ENCODE measurements at regions of chr16 and their contacts with region 1.

Region 1: GRCh38 chr16:46947900-46948547 is 25.4 kb downstream of the DNAJA2 start:
- DNase-seq: peak; percentile 57
- H3K4me3 Mint-ChIP-seq: no peak overlapping the region
- H3K27ac Mint-ChIP-seq: peak overlapping the region; percentile 76
- H3K4me1 Mint-ChIP-seq: peaks cover 34% of the 10 kb centered on the region
- H3K27me3 Mint-ChIP-seq: no peaks in the 10 kb centered on the region

Region 2: DNA sequence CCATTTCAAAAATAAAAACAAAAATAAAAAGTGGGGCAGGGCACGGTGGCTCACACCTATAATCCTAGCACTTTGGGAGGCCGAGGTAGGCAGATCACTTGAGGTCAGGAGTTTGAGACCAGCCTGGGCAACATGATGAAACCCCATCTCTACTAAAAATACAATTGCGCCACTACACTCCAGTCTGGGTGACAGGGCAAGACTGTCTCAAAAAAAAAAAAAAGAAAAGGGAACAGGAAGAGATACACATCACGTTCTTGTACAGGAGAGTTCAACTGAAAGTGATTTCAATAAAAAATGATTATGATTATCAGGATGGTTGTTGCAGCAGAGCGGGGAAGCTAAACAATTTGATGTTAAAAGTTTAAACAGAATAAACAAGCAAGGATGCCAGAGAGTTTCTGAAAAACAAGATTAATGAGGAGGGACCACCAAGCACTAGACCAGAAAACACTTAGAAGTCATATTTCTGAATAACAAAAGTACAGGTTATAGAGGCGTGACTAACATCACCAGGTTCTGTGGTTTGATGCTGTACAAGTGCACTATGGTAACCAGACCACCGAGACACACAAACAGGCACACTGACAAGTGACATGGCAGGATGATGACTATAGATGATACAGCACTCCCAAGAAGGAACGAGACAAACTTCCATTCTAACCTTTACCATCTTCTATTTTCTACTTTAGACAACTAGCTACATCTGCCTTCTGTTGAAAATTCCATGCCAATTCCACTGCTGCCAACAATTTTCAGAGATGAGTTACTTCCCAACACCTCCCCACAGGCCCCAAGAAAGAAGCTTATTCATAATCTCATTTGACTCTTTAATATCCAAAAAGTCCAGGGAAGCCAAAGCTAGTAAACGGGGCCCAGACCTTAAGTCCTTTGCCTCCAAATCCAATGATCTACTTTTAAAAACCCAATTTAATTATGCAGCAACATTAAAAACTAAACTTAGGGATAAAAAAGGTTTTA is 13.6 kb after region 1 on chr16:
- CTCF ChIA-PET with region 1: interaction called, 8 read pairs
- POLR2A ChIA-PET with region 1: interaction called, 3 read pairs
- intact Hi-C with region 1: loop called (anchors 1 kb)
- DNase-seq: peak; percentile 68
- H3K4me3 Mint-ChIP-seq: no peak overlapping the region
- H3K27ac Mint-ChIP-seq: peak overlapping the region; percentile 86
- H3K4me1 Mint-ChIP-seq: peaks cover 38% of the 10 kb centered on the region
- H3K27me3 Mint-ChIP-seq: no peaks in the 10 kb centered on the region

Region 3: GRCh38 chr16:47018223-47018891 is 70.3 kb after region 1 on chr16:
- CTCF ChIA-PET with region 1: interaction called, 4 read pairs
- POLR2A ChIA-PET with region 1: no interaction called
- intact Hi-C with region 1: loop called (anchors 1 kb)
- DNase-seq: peak; percentile 79
- H3K4me3 Mint-ChIP-seq: no peak overlapping the region
- H3K27ac Mint-ChIP-seq: no peak overlapping the region
- H3K4me1 Mint-ChIP-seq: peaks cover 19% of the 10 kb centered on the region
- H3K27me3 Mint-ChIP-seq: no peaks in the 10 kb centered on the region

Region 4: GRCh38 chr16:47037746-47038458 is 89.9 kb after region 1 on chr16:
- CTCF ChIA-PET with region 1: interaction called, 30 read pairs
- POLR2A ChIA-PET with region 1: no interaction called
- intact Hi-C with region 1: loop called (anchors 1 kb)
- DNase-seq: peak; percentile 92
- H3K4me3 Mint-ChIP-seq: peak overlapping the region; percentile 71
- H3K27ac Mint-ChIP-seq: no peak overlapping the region
- H3K4me1 Mint-ChIP-seq: peaks cover 6% of the 10 kb centered on the region
- H3K27me3 Mint-ChIP-seq: peaks cover 4% of the 10 kb centered on the region

Region 5: DNA sequence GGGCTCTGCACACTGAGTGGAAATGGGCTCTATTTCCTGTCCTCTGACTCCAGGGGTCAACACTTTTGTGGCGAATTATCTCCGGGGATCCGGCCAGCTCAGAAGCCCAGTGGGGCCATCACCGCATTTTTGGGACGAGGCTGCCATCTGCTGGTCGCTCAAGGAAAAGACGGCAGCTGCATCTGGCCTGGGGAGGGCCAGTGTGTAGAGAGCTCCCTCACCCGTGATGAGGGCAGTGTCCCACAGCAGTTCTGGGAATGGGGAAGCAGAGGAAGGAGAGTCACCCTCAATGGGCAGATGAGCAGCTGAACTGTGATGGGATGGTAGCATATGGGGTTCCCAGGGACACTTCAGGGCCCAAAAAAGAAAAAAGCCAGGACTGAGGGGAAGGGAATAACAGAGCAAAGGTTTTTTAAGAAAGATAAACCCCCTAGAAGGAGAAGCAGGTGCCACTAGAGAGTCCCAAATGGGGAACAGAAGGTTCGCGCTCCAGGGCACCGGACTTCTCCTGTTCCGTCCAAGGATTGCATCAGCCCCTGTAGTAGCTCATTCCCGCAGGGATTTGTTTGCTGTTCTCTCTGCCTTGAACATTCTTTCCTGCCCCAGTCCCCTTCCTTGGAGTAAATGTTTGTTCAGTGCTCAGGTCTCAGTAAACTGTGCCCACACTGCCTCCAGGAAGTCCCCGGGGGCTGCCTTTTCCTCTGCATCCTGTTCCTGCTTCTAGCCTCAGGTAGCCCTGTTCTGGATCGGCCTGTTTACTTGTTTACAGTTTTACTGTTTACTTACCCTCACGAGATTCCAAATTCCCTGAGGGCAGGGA is 1217.1 kb after region 1 on chr16:
- CTCF ChIA-PET with region 1: interaction called, 21 read pairs
- POLR2A ChIA-PET with region 1: no interaction called
- intact Hi-C with region 1: no loop called
- DNase-seq: peak; percentile 80
- H3K4me3 Mint-ChIP-seq: no peak overlapping the region
- H3K27ac Mint-ChIP-seq: no peak overlapping the region
- H3K4me1 Mint-ChIP-seq: peaks cover 5% of the 10 kb centered on the region
- H3K27me3 Mint-ChIP-seq: peaks cover 6% of the 10 kb centered on the region

Measured in activated CD4-positive, alpha-beta memory T cell treated with anti-CD3 and anti-CD28 coated beads for 36 hours (primary cell).